ENCODE measurements at regions of chr1 and their contacts with region 1.

Region 1: GRCh38 chr1:163174524-163175437 is 27.9 kb downstream of the RGS5 start:
- DNase-seq: no peak
- H3K4me3 ChIP-seq: no peak overlapping the region
- H3K27ac ChIP-seq: no peak overlapping the region
- H3K4me1 ChIP-seq: peaks cover 9% of the 10 kb centered on the region
- H3K27me3 ChIP-seq: no peaks in the 10 kb centered on the region
- CTCF ChIP-seq: peak; percentile 17 to 85 (median 67)
- POLR2A ChIP-seq: no peak

Region 2: DNA sequence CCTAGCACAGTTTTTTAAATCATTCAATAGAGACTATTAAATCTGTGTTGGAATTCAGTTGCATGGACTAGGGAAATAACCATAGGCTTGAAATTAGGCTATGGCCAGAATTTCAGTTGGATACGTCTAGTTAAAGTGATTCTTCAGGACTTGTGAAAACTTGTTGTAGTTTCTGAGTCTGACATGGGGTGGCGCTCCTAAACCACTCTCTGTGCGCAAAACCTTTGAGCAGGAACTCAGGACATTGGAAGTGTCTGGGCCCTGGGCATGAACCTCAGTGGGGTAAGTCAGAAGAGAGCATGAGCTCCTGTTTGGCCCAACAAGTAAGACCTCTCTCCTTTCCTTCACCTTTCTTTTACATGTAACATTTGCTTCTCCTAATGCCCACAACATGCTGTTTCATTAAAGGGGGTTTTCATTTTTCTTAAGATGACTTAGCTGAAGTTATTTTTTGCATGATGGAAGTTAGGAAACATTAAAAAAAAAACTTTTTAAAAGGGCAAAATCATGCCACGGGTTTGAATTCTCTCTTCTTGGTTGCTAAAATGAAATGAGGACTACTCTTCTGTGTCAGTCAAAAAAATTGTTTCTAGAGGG is 296.7 kb before region 1 on chr1:
- intact Hi-C with region 1: loop called (anchors 5 kb)
- DNase-seq: no peak
- H3K4me3 ChIP-seq: no peak overlapping the region
- H3K27ac ChIP-seq: no peak overlapping the region
- H3K4me1 ChIP-seq: no peaks in the 10 kb centered on the region
- H3K27me3 ChIP-seq: no peaks in the 10 kb centered on the region
- CTCF ChIP-seq: peak; percentile 17 to 53 (median 44)
- POLR2A ChIP-seq: no peak

Region 3: GRCh38 chr1:163071405-163072255 is 103.2 kb before region 1 on chr1:
- intact Hi-C with region 1: loop called (anchors 10 kb)
- DNase-seq: no peak
- H3K4me3 ChIP-seq: no peak overlapping the region
- H3K27ac ChIP-seq: no peak overlapping the region
- H3K4me1 ChIP-seq: no peaks in the 10 kb centered on the region
- H3K27me3 ChIP-seq: no peaks in the 10 kb centered on the region
- CTCF ChIP-seq: peak in 1 of 3 experiments; percentile 38
- POLR2A ChIP-seq: no peak

Region 4: DNA sequence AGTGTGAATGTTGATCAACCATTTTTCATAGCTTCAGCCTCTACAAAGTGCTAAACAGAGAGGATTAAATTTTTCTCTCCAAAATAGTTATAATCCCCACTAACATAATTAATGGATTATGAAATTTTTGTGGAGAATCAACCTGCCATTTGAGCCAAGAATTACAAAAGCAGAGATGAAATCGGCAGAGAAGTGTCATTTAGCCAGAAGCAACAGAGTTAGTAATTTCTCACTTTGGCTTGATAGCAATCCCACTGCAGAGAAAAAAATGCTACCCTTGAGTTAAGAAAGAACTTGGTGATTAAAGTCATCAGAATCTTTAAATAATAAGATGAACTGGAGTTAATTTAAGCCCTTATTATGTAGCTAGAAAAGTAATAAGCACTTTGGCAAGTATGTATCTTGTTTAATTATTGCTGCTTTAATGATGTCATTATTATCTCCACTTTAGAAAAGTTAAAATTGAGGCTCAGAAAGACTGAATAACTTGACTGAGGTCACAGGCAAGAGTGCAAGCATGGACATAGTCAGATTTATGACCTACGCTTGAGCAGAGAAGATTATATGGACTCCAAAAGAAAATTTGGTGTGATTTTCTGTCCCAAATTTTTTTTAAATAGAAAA is 68.3 kb before region 1 on chr1:
- intact Hi-C with region 1: no loop called
- DNase-seq: no peak
- H3K4me3 ChIP-seq: no peak overlapping the region
- H3K27ac ChIP-seq: no peak overlapping the region
- H3K4me1 ChIP-seq: no peaks in the 10 kb centered on the region
- H3K27me3 ChIP-seq: no peaks in the 10 kb centered on the region
- CTCF ChIP-seq: no peak
- POLR2A ChIP-seq: no peak

Region 5: GRCh38 chr1:163395790-163396189 is 221.0 kb after region 1 on chr1:
- intact Hi-C with region 1: no loop called
- DNase-seq: no peak
- H3K4me3 ChIP-seq: no peak overlapping the region
- H3K27ac ChIP-seq: no peak overlapping the region
- H3K4me1 ChIP-seq: no peaks in the 10 kb centered on the region
- H3K27me3 ChIP-seq: no peaks in the 10 kb centered on the region
- CTCF ChIP-seq: no peak
- POLR2A ChIP-seq: no peak

Region 6: DNA sequence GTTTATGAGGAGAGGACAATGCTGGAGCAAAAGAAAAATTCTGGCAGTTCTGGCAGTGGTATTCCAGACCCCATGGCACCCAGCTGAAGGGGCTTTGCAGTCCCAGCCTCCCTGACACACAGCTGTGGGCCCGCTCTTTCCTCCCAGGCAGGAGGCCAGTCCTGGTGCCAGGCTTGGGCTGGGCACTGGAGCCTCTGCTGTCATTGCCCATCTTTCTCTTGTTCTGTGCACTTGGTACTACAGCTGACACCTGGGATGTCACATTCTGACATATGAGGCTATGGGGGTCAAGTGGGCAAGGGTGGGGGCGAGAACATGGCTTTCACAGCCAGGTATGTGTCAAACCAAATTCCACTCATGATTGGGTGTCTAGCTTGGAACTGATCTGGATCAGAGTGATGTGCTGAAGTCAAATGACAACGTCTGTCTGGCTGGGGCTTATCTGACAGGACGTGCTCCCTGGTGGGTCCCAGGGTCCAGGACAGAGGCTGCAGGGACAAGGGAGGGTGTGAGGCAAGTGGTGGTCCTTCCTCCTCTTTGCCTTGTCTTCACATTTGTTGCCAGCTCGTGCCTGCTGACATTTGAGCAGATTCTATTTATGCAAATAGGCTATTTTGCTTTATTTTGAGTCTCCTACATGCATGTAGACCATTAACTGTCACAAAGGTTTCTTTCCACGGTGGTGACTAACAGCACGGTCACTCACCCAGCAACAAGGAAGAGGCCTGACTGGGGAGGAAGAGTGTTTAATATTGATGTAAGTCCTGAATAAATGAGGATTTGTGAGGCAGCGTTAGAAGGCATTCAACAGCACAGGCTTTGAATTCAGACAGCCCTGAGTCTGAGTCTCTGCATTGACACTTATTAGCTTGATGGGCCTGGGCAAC is 1720.5 kb after region 1 on chr1:
- intact Hi-C with region 1: no loop called
- DNase-seq: no peak
- H3K4me3 ChIP-seq: no peak overlapping the region
- H3K27ac ChIP-seq: no peak overlapping the region
- H3K4me1 ChIP-seq: no peaks in the 10 kb centered on the region
- H3K27me3 ChIP-seq: no peaks in the 10 kb centered on the region
- CTCF ChIP-seq: no peak
- POLR2A ChIP-seq: no peak